K562 (cell line): ENCODE measurements at regions of chr15 and their contacts with region 1.

Region 1: GRCh38 chr15:69452692-69453521 is at the start of gene RPLP1:
- DNase-seq: peak; percentile 96 to 99 (median 96)
- ATAC-seq: peak; percentile 87
- H3K4me3 ChIP-seq: peak within 1 kb of the TSS; percentile 98
- H3K27ac ChIP-seq: peak within 1 kb of the TSS; percentile 90
- H3K4me1 ChIP-seq: peaks cover 9 to 16% of the 10 kb centered on the region in 2 experiments; a peak in 4 of 5 replicates
- H3K27me3 ChIP-seq: no peaks in the 10 kb centered on the region
- CTCF ChIP-seq: no peak
- EP300 ChIP-seq: no peak
- POLR2A ChIP-seq: peak; percentile 100
- RAD21 ChIP-seq: no peak
- polyA plus RNA-seq, gene RPLP1: 2,333 to 2,378 TPM

Region 2: DNA sequence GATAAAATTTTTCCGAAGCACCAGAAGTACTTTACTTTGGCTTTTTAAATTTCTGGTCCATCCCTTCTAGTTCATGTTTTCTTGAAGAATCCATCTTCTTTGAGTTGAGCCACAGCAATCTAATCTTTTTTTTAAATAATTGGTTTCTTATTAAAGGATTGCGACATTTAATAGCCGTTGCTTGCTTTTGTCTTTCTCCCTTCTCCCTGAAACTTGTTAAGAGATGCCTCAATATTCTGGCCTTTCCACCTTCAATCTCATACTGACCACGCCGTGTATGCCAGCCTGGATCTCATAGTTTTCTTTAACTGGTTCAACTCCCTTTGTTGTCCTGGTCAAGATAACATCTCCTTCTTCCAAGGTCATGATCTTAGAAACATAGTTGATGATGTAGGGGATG is 18.7 kb before region 1 on chr15:
- CTCF ChIA-PET with region 1: no interaction called
- POLR2A ChIA-PET with region 1: interaction called, 50 read pairs
- in situ Hi-C with region 1: no loop called
- intact Hi-C with region 1: no loop called
- DNase-seq: no peak
- ATAC-seq: no peak
- H3K4me3 ChIP-seq: no peak overlapping the region
- H3K27ac ChIP-seq: no peak overlapping the region
- H3K4me1 ChIP-seq: no peaks in the 10 kb centered on the region
- H3K27me3 ChIP-seq: no peaks in the 10 kb centered on the region
- CTCF ChIP-seq: no peak
- EP300 ChIP-seq: no peak
- POLR2A ChIP-seq: no peak
- RAD21 ChIP-seq: no peak

Region 3: GRCh38 chr15:69468241-69469121 is 15.6 kb after region 1 on chr15:
- CTCF ChIA-PET with region 1: no interaction called
- POLR2A ChIA-PET with region 1: interaction called, 127 read pairs
- in situ Hi-C with region 1: no loop called
- intact Hi-C with region 1: no loop called
- DNase-seq: peak; percentile 54 to 73 (median 59)
- ATAC-seq: peak; percentile 75
- H3K4me3 ChIP-seq: no peak overlapping the region
- H3K27ac ChIP-seq: no peak overlapping the region
- H3K4me1 ChIP-seq: peaks cover 21 to 25% of the 10 kb centered on the region in 2 experiments; a peak in 4 of 5 replicates
- H3K27me3 ChIP-seq: peaks cover 0 to 9% of the 10 kb centered on the region in 2 experiments; a peak in 2 of 5 replicates
- CTCF ChIP-seq: no peak
- EP300 ChIP-seq: no peak
- POLR2A ChIP-seq: no peak
- RAD21 ChIP-seq: no peak